ENCODE measurements at regions of chr10 and their contacts with region 1.

Region 1: GRCh38 chr10:29635711-29636144 is 957 bp upstream of the SVIL start:
- DNase-seq: no peak
- H3K4me3 Mint-ChIP-seq: no peak overlapping the region
- H3K27ac Mint-ChIP-seq: no peak overlapping the region
- H3K4me1 Mint-ChIP-seq: peaks cover 28% of the 10 kb centered on the region
- H3K27me3 Mint-ChIP-seq: no peaks in the 10 kb centered on the region

Region 2: DNA sequence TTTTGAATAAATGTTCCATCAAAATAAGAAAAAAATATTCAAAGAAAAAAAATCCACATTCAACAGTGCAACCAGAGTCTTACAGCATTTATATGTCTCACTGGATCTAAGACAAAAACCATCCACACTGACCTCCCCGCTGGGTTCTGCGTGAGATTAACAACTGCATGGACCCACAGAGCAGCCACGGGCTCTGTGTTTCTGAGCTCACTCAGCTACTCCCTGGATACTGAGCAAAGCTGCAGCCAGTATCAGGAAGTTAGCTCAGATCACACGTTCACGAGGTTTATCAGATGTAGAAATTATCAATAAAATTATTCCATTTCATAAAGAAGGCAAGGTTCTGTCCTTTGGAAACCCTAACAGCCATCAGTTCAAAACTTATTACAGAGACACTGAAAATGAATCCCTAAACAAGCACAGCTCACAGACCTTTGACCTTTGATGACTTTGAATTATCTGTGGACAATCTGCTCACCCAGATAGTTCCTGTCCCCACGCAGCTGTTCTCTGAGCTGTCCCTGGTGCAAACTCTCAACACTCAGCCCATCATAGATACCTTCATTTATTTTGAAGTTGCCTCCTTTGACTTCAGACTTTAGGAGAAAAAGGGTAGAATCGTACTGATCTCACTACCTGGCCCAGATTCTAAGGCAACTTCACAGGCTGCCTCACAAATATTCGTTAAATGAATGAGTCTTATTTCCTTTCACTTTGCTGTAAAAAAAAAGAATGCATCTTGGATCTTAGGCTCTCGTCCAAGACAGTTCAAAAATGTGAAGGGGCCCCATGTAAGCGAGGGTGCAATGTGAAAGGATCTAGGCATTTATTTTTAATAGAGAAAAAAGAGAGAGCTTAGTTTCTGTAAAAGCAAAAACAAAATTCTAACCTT is 66.8 kb after region 1 on chr10:
- intact Hi-C with region 1: no loop called
- DNase-seq: no peak
- H3K4me3 Mint-ChIP-seq: no peak overlapping the region
- H3K27ac Mint-ChIP-seq: no peak overlapping the region
- H3K4me1 Mint-ChIP-seq: peaks cover 19% of the 10 kb centered on the region
- H3K27me3 Mint-ChIP-seq: no peaks in the 10 kb centered on the region

Region 3: DNA sequence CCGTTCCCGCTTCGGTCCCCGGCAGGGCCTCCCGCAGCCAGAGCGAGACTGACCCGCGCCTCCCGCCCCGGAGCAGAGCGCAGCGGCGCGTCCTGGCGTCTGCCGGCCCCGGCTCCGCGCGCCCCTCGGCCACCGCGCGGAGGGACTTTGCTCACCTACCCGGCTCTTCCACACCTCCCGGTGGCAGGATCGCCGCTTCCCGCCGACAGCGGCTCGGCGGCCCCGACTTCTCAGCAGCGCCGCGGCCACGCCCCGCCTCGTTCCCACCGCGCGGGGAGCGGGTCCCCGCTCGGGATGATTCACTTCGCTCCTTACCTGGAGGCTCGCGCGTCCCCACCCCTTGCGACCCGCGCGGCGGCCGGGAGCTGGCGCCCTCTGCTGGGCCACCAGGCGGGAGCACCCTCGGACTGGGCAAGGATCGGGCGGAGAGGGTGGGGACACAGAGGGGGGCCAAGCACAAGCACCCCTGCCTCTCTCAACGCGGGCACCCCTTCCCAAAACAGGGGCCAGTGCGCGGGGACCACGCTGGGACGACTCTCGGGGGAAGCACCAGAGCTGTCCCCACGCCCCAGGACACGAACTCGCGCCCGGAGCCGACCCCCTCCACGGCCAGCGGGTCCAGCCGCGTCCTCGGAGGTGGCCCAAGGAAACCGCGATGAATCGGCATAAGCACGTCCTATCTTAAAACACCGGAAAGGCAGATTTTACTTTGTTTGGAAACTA is 100.0 kb after region 1 on chr10:
- intact Hi-C with region 1: loop called (anchors 5 kb)
- DNase-seq: peak; percentile 79
- H3K4me3 Mint-ChIP-seq: peak overlapping the region; percentile 77
- H3K27ac Mint-ChIP-seq: peak overlapping the region; percentile 66
- H3K4me1 Mint-ChIP-seq: peaks cover 12% of the 10 kb centered on the region
- H3K27me3 Mint-ChIP-seq: peaks cover 36% of the 10 kb centered on the region

Measured in activated T-helper 2 cell treated with anti-CD3 and anti-CD28 coated beads, Interferon-gamma antibody, Interleukin-2, Interleukin-4, amounts not matched to agents 10 μg/mL and 5 μg/mL and 100 μg/mL, durations not matched to agents 14 hours and 24 hours and 36 hours (primary cell).